ENCODE measurements at regions of chr16 and their contacts with region 1.

Region 1: GRCh38 chr16:56866943-56867830 is 2.2 kb downstream of the SLC12A3 start:
- DNase-seq: peak; percentile 45
- H3K4me3 Mint-ChIP-seq: no peak overlapping the region
- H3K27ac Mint-ChIP-seq: no peak overlapping the region
- H3K4me1 Mint-ChIP-seq: peaks cover 16% of the 10 kb centered on the region
- H3K27me3 Mint-ChIP-seq: no peaks in the 10 kb centered on the region

Region 2: DNA sequence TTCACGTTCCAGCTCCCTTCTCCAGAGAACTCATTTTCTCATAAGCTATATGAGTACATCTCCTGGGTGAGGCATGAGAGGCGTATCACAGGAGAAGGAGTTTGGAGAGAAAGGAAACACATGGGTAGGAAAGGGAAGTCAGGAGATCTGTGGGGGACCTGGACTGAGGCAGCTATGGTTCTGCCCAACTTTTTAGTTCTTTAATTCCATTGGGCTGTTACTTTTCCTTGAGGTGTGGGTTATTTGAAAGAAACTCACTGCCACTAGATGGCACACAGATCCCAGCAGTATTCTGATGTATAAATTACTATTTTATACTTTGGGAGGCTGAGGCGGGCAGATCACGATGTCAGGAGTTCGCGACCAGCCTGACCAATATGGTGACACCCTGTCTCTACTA is 73.7 kb before region 1 on chr16:
- CTCF ChIA-PET with region 1: interaction called, 13 read pairs
- POLR2A ChIA-PET with region 1: no interaction called
- DNase-seq: peak; percentile 27
- H3K4me3 Mint-ChIP-seq: no peak overlapping the region
- H3K27ac Mint-ChIP-seq: no peak overlapping the region
- H3K4me1 Mint-ChIP-seq: no peaks in the 10 kb centered on the region
- H3K27me3 Mint-ChIP-seq: no peaks in the 10 kb centered on the region

Region 3: GRCh38 chr16:56851671-56852400 is 15.4 kb before region 1 on chr16:
- CTCF ChIA-PET with region 1: interaction called, 10 read pairs
- POLR2A ChIA-PET with region 1: interaction called, 9 read pairs
- DNase-seq: no peak
- H3K4me3 Mint-ChIP-seq: no peak overlapping the region
- H3K27ac Mint-ChIP-seq: no peak overlapping the region
- H3K4me1 Mint-ChIP-seq: peaks cover 24% of the 10 kb centered on the region
- H3K27me3 Mint-ChIP-seq: no peaks in the 10 kb centered on the region

Region 4: DNA sequence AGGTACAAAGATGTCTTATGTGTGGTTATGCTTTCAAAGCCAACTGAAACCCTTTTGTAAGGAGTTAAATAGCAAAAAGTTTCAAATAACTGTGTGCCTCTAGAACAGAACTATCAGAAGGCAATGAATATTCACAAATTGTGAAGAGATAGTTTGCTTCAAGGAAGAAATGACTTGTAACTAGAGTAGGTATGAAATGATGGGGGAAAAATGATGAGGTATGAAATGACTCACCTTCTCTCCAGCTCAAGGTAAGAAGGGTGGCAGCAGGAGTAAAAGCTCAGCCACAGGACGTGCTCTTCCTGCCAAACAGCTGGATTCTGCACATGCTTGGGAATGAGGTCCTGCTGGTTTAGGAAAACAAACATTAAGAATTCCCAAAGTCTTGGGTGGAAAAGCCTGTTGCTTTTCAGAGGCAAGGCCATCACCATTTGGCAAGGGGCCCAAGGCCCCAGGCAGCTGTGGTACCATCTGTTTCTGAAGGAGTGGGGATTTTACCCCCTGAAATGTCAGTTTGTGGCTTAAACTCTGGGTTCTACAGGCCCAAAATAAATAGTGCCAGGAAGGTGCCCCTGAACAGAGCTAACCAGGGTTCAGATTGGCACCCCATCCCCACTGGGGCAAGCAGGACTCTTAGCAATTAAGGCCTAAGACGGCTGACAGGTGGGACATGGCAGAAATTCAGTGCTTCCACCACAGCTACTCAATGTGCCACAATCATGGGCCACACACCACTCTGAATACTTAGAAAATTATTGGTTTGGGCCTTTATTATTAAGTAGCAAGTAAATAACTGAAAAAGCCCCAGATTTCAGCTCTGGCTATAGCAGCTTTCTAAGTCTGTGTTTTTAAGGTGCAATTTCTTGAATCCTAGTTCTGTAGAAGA is 78.0 kb after region 1 on chr16:
- CTCF ChIA-PET with region 1: interaction called, 22 read pairs
- POLR2A ChIA-PET with region 1: interaction called, 3 read pairs
- DNase-seq: no peak
- H3K4me3 Mint-ChIP-seq: no peak overlapping the region
- H3K27ac Mint-ChIP-seq: peak overlapping the region; percentile 69
- H3K4me1 Mint-ChIP-seq: peaks cover 49% of the 10 kb centered on the region
- H3K27me3 Mint-ChIP-seq: no peaks in the 10 kb centered on the region